AG04450 (cell line): ENCODE measurements at regions of chr13 and their contacts with region 1.

Region 1: GRCh38 chr13:24020375-24020830 is 123.1 kb upstream of the C1QTNF9B start:
- DNase-seq: peak; percentile 54
- H3K4me3 ChIP-seq: no peak overlapping the region
- H3K27ac ChIP-seq: no peak overlapping the region
- H3K27me3 ChIP-seq: no peaks in the 10 kb centered on the region
- CTCF ChIP-seq: peak; percentile 88

Region 2: GRCh38 chr13:24005755-24006281 is 14.6 kb before region 1 on chr13:
- CTCF ChIA-PET with region 1: interaction called, 23 read pairs
- POLR2A ChIA-PET with region 1: no interaction called
- DNase-seq: no peak
- H3K4me3 ChIP-seq: no peak overlapping the region
- H3K27ac ChIP-seq: no peak overlapping the region
- H3K27me3 ChIP-seq: no peaks in the 10 kb centered on the region
- CTCF ChIP-seq: no peak

Region 3: GRCh38 chr13:24033527-24034302 is 13.3 kb after region 1 on chr13:
- CTCF ChIA-PET with region 1: interaction called, 15 read pairs
- POLR2A ChIA-PET with region 1: no interaction called
- DNase-seq: peak; percentile 88
- H3K4me3 ChIP-seq: no peak overlapping the region
- H3K27ac ChIP-seq: peak overlapping the region; percentile 88
- H3K27me3 ChIP-seq: no peaks in the 10 kb centered on the region
- CTCF ChIP-seq: no peak

Region 4: DNA sequence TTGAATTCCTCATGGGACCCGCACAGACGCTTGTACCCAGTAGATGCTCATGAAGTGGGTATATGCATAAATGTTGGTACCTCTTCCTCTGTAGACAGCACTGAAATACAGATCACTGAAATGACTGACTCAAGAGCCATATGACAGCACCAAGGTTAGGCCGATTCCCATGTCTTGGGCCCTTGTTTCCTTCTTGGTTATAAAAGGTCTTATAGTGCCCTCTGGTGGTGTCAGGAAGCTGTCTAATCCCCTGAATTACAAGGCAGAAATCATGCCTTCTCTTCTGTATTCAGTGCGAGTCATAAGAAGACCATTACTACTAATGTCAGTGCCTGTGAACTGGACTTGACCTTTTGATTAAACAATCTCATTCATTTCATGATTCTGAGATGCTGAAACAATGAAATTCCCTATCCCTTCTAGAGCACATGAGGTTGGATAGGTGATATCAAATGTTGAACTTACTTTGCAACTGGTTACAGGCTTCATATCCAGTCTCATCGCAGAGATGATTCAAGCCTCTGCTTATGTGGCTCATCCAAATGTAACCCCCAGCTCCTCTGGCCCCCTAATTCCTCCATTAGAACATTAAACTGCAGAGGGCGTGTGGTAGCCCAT is 199.8 kb after region 1 on chr13:
- CTCF ChIA-PET with region 1: interaction called, 94 read pairs
- POLR2A ChIA-PET with region 1: no interaction called
- DNase-seq: peak; percentile 61
- H3K4me3 ChIP-seq: no peak overlapping the region
- H3K27ac ChIP-seq: no peak overlapping the region
- H3K27me3 ChIP-seq: no peaks in the 10 kb centered on the region
- CTCF ChIP-seq: peak; percentile 73